ENCODE measurements at regions of chr2 and their contacts with region 1.

Region 1: DNA sequence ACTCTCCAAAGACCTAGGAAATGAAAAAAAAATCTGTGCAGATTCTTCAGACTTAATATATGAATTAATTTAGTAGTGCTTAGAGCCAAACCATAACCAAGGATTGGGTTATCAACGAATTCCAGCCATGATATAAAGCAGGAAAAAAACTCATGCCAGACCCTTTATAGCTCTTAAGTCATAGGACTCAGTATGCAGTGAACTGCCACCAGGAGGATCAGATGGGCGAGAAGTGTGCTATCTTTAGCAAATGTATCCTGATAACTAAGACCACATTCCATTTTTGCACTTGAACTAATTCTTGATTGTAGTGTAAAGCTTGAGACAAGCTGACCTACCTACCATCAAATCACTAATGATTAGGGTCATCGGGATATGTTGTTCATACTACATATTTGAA is 178.1 kb downstream of the IKZF2 start:
- DNase-seq: no peak
- ATAC-seq: no peak
- H3K4me3 Mint-ChIP-seq: no peak overlapping the region
- H3K27ac Mint-ChIP-seq: no peak overlapping the region
- H3K4me1 Mint-ChIP-seq: no peaks in the 10 kb centered on the region
- H3K27me3 Mint-ChIP-seq: no peaks in the 10 kb centered on the region
- CTCF ChIP-seq: no peak

Region 2: DNA sequence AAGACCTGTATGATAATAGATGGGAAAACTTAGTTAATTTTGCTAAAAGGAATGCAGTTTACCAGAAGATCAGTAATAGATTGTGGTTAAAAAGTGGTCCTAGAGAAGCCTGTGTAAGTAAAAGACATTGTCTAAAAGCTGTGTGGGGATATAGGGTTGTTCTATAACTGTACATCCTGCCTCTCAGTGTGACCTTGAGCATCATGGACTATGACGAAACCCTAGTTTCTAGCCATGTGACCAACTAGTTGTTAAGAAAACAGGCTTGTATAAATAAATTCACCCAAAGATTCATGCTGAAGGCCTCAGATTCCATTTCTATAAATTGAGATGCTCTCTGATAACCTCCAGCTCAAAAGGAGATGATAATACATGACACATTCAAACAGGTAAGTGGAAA is 17.4 kb after region 1 on chr2:
- CTCF ChIA-PET with region 1: no interaction called
- POLR2A ChIA-PET with region 1: no interaction called
- intact Hi-C with region 1: loop called (anchors 1 kb)
- DNase-seq: no peak
- ATAC-seq: no peak
- H3K4me3 Mint-ChIP-seq: no peak overlapping the region
- H3K27ac Mint-ChIP-seq: peak overlapping the region; percentile 51
- H3K4me1 Mint-ChIP-seq: peaks cover 10% of the 10 kb centered on the region
- H3K27me3 Mint-ChIP-seq: no peaks in the 10 kb centered on the region
- CTCF ChIP-seq: no peak

Region 3: GRCh38 chr2:213057977-213058376 is 84.6 kb after region 1 on chr2:
- CTCF ChIA-PET with region 1: no interaction called
- POLR2A ChIA-PET with region 1: no interaction called
- intact Hi-C with region 1: no loop called
- DNase-seq: no peak
- ATAC-seq: no peak
- H3K4me3 Mint-ChIP-seq: no peak overlapping the region
- H3K27ac Mint-ChIP-seq: no peak overlapping the region
- H3K4me1 Mint-ChIP-seq: peaks cover 12% of the 10 kb centered on the region
- H3K27me3 Mint-ChIP-seq: no peaks in the 10 kb centered on the region
- CTCF ChIP-seq: no peak